Prostate gland (tissue), 2 donors: ENCODE measurements at regions of chr3 and their contacts with region 1.

Region 1: GRCh38 chr3:74624301-74624700 is 9.8 kb upstream of the CNTN3 start:
- DNase-seq: no peak
- H3K4me3 ChIP-seq: no peak overlapping the region
- H3K27ac ChIP-seq: no peak overlapping the region
- H3K4me1 ChIP-seq: no peaks in the 10 kb centered on the region
- H3K27me3 ChIP-seq: no peaks in the 10 kb centered on the region
- CTCF ChIP-seq: no peak
- POLR2A ChIP-seq: no peak

Region 2: DNA sequence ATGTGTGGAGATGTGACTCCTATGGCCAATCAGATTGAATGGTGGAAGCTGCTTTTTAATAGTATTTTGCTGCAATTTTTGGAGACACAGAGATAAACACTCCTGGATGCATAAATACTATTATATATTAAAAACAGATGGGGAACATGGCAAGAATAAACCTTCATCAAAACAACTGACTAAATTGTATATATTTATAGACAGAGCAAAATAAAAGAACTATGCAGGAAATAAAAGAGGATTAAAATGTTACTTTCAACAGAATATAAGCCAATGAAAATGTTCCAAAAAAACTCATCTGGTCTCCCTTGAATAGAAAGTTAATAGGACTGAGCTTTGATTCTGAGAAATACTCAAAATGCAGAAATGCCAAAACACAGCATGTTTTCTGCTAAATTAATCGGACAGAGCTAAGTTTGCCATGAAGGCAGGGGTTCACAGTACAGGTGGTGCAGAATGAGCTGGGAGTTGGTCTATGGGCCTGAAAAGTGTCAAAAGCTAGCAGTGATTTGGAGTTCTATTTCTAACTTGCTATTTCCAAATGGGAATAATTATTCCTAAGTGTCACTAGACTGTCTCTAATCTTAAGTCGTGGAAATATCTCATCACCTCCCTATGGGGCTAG is 237.1 kb before region 1 on chr3:
- intact Hi-C with region 1: loop called (anchors 10 kb)
- DNase-seq: no peak
- H3K4me3 ChIP-seq: no peak overlapping the region
- H3K27ac ChIP-seq: no peak overlapping the region
- H3K4me1 ChIP-seq: no peaks in the 10 kb centered on the region
- H3K27me3 ChIP-seq: no peaks in the 10 kb centered on the region
- CTCF ChIP-seq: no peak
- POLR2A ChIP-seq: no peak

Region 3: DNA sequence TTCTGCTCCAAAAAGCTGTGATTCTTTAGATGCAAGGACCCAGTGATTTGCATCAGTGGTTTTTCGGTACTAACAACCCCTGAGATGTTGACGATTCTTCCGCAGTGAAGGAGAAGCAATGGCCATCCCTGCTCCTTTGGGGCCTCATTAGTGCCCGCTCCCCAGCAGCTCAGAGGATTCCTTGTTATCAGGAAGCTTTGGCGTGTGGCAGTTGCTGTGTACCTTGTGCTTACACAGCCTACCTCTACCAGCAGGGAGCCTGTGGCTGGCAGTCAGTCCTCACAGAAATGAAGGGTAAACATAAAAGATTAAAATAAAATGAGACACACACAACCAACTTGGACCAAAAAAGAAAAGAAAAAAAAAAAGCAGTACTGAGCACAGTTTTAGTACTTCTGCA is 65.0 kb before region 1 on chr3:
- intact Hi-C with region 1: no loop called
- DNase-seq: no peak
- H3K4me3 ChIP-seq: no peak overlapping the region
- H3K27ac ChIP-seq: no peak overlapping the region
- H3K4me1 ChIP-seq: no peaks in the 10 kb centered on the region
- H3K27me3 ChIP-seq: no peaks in the 10 kb centered on the region
- CTCF ChIP-seq: no peak
- POLR2A ChIP-seq: no peak